ENCODE measurements at regions of chr9 and their contacts with region 1.

Region 1: GRCh38 chr9:128322404-128323211 is at the starts of genes COQ4 and TRUB2:
- DNase-seq: peak; percentile 91 to 94
- ATAC-seq: peak; percentile 96 to 99 (median 98)
- H3K4me3 ChIP-seq: peak within 1 kb of the TSS; percentile 73 to 100 (median 92)
- H3K27ac ChIP-seq: peak within 1 kb of the TSS; percentile 82 to 96 (median 93)
- H3K4me1 ChIP-seq: peaks cover 8 to 44% (median 35%) of the 10 kb centered on the region in 9 donors
- H3K27me3 ChIP-seq: no peaks in the 10 kb centered on the region
- CTCF ChIP-seq: no peak
- total RNA-seq, gene COQ4: 26.5 to 35.8 (median 30.0) TPM
- total RNA-seq, gene TRUB2: 32.8 to 50.3 (median 44.2) TPM

Region 2: GRCh38 chr9:128191406-128192046 is 131.1 kb before region 1 on chr9 and contains the start of gene CIZ1:
- intact Hi-C with region 1: loop called in 1 of 10 experiments (anchors 10 kb)
- DNase-seq: peak; percentile 73 to 83
- ATAC-seq: peak; percentile 86 to 94 (median 92)
- H3K4me3 ChIP-seq: peak within 1 kb of the TSS; percentile 48 to 97 (median 88)
- H3K27ac ChIP-seq: peak within 1 kb of the TSS; percentile 74 to 94 (median 88)
- H3K4me1 ChIP-seq: peaks cover 10 to 32% (median 21%) of the 10 kb centered on the region in 9 donors
- H3K27me3 ChIP-seq: no peaks in the 10 kb centered on the region
- CTCF ChIP-seq: peak; percentile 67 to 93 (median 82)
- total RNA-seq, gene CIZ1: 63.0 to 96.0 (median 76.7) TPM

Region 3: DNA sequence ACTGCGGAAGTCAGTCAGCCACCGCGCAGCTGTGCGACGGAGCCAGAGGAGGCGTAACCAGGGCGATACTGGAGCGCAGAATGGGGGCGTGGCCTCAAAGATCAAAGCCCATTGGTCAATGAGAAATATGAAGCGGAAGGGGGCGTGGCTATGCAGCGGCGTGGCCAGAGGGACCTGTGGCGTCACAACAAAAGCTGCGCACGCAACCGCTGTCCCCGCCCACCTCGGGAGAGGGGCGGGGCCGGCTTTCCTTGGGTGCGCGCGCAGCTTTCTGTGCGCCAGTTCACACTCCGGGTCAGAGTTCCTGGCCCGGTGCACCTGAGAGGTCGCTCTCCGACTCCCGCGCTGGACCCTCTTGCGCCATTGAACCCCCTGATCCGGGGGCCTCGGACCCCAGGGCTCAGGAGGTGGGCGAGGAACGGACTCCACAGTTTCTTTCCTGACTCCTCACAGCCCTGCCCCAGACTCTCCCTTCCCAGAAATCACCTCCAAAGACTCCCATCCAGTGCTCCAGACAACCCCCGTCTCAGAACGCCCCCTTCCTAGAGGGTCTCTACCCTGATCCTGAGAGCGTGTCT is 46.5 kb before region 1 on chr9 and contains the starts of genes GOLGA2 and SWI5:
- intact Hi-C with region 1: loop called in 3 of 10 experiments (anchors 5 kb)
- DNase-seq: peak; percentile 100
- ATAC-seq: peak; percentile 97 to 98 (median 98)
- H3K4me3 ChIP-seq: peak within 1 kb of the TSS; percentile 76 to 96 (median 90)
- H3K27ac ChIP-seq: peak within 1 kb of the TSS; percentile 10 to 96 (median 94)
- H3K4me1 ChIP-seq: peaks cover 3 to 56% (median 29%) of the 10 kb centered on the region in 9 donors
- H3K27me3 ChIP-seq: no peaks in the 10 kb centered on the region
- CTCF ChIP-seq: no peak
- total RNA-seq, gene GOLGA2: 78.0 to 101 (median 89.1) TPM
- total RNA-seq, gene SWI5: 13.9 to 23.8 (median 20.8) TPM

Region 4: DNA sequence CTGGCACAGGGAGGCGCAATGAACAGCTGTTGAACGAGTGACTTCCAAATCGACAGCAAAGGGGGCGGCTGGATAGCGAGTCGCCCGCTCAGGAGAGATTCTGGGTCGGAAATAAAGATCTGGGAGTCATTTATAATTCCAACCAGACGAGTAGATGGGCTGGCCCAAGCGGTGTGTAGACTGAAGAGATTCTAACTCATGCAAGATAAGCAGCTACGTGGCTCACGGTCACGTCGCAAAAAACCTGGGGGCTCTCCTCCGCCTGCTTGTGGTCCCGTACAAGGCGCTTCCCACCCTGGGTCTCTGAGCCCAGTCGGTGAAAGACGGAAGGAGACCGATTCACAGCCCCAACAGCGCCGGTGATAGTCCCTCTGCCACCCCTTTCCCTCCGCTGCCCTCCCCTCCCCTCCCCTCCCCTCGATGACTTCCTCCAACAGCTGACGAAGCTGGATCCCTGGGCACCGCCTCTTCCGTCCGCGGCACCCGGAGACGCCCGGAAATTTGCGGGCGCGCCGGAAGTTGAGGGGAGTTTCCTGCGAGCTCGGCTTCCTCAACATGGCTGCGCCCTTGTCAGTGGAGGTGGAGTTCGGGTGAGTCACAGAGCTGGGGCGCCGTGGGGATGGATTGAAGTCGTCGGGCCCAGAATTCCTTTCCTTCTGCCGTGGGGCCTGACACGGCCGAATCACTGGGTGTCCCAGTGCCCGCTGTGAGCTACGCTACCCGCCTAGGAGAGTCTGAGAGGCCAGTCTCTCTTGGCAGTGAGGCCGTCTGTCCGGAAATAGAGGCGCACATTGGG is 48.4 kb after region 1 on chr9 and contains the start of gene URM1:
- intact Hi-C with region 1: loop called in 1 of 10 experiments (anchors 1 kb)
- DNase-seq: peak; percentile 95 to 96
- ATAC-seq: peak; percentile 95 to 99 (median 98)
- H3K4me3 ChIP-seq: peak within 1 kb of the TSS; percentile 62 to 97 (median 78)
- H3K27ac ChIP-seq: peak within 1 kb of the TSS; percentile 74 to 97 (median 93)
- H3K4me1 ChIP-seq: peaks cover 2 to 29% (median 22%) of the 10 kb centered on the region in 9 donors
- H3K27me3 ChIP-seq: no peaks in the 10 kb centered on the region
- CTCF ChIP-seq: peak in 3 of 9 donors; percentile 1 to 27 (median 22)
- total RNA-seq, gene URM1: 39.2 to 64.3 (median 51.2) TPM